Ascending aorta (tissue), 2 donors: ENCODE measurements at regions of chr4 and their contacts with region 1.

Region 1: GRCh38 chr4:26206339-26206738 is 114.5 kb upstream of the RBPJ start:
- DNase-seq: peak in 1 of 2 donors; percentile 66
- H3K4me3 ChIP-seq: no peak overlapping the region
- H3K27ac ChIP-seq: peak overlapping the region in 1 of 2 donors; percentile 51
- H3K4me1 ChIP-seq: peaks cover 0 to 25% of the 10 kb centered on the region in 2 donors
- H3K27me3 ChIP-seq: no peaks in the 10 kb centered on the region
- CTCF ChIP-seq: no peak

Region 2: GRCh38 chr4:26022346-26023202 is 183.8 kb before region 1 on chr4:
- intact Hi-C with region 1: loop called (anchors 5 kb)
- DNase-seq: peak in 1 of 2 donors; percentile 87
- H3K4me3 ChIP-seq: peak overlapping the region in 1 of 2 donors; percentile 35
- H3K27ac ChIP-seq: peak overlapping the region; percentile 58 to 67
- H3K4me1 ChIP-seq: peaks cover 8 to 33% of the 10 kb centered on the region in 2 donors
- H3K27me3 ChIP-seq: no peaks in the 10 kb centered on the region
- CTCF ChIP-seq: no peak

Region 3: DNA sequence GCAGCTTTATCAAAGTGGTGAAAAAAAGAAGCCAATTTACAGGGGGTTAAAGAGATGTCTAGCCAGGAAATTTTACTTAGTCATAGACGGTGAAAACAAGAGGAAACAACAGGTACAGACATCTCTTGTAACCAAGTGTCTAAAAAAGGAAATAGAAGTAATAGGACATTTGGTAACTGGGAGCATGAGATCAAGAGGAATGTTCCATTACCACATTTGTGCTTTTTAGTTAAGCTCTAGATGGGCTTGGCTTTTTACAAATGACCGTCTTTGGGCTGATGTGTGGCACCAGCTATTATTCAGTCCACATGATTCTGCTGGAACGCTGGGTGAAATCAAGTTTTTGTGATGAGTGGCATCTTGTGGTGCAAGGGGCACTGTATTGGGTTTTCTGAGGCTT is 112.8 kb before region 1 on chr4:
- intact Hi-C with region 1: loop called (anchors 10 kb)
- DNase-seq: peak in 1 of 2 donors; percentile 74
- H3K4me3 ChIP-seq: no peak overlapping the region
- H3K27ac ChIP-seq: peak overlapping the region; percentile 62 to 66
- H3K4me1 ChIP-seq: peaks cover 0 to 6% of the 10 kb centered on the region in 2 donors
- H3K27me3 ChIP-seq: no peaks in the 10 kb centered on the region
- CTCF ChIP-seq: no peak

Region 4: GRCh38 chr4:26235500-26235899 is 29.2 kb after region 1 on chr4:
- intact Hi-C with region 1: loop called (anchors 2 kb)
- DNase-seq: peak in 1 of 2 donors; percentile 87
- H3K4me3 ChIP-seq: no peak overlapping the region
- H3K27ac ChIP-seq: peak overlapping the region; percentile 34 to 58
- H3K4me1 ChIP-seq: peaks cover 0 to 19% of the 10 kb centered on the region in 2 donors
- H3K27me3 ChIP-seq: no peaks in the 10 kb centered on the region
- CTCF ChIP-seq: peak in 1 of 3 experiments; percentile 22